Motor neuron (in vitro differentiated cells): ENCODE measurements at regions of chr2 and their contacts with region 1.

Region 1: GRCh38 chr2:88144914-88145497 is 17.1 kb upstream of the FABP1 start:
- ATAC-seq: no peak
- H3K4me3 ChIP-seq: no peak overlapping the region
- H3K27ac ChIP-seq: no peak overlapping the region
- H3K4me1 ChIP-seq: no peaks in the 10 kb centered on the region

Region 2: GRCh38 chr2:88074854-88075292 is 70.1 kb before region 1 on chr2:
- in situ Hi-C with region 1: loop called in 3 of 9 experiments (anchors 10 to 25 kb)
- ATAC-seq: peak in 1 of 8 experiments; percentile 32
- H3K4me3 ChIP-seq: no peak overlapping the region
- H3K27ac ChIP-seq: no peak overlapping the region
- H3K4me1 ChIP-seq: no peaks in the 10 kb centered on the region

Region 3: GRCh38 chr2:88400037-88400767 is 255.2 kb after region 1 on chr2:
- in situ Hi-C with region 1: no loop called
- ATAC-seq: no peak
- H3K4me3 ChIP-seq: no peak overlapping the region
- H3K27ac ChIP-seq: no peak overlapping the region
- H3K4me1 ChIP-seq: no peaks in the 10 kb centered on the region

Region 4: DNA sequence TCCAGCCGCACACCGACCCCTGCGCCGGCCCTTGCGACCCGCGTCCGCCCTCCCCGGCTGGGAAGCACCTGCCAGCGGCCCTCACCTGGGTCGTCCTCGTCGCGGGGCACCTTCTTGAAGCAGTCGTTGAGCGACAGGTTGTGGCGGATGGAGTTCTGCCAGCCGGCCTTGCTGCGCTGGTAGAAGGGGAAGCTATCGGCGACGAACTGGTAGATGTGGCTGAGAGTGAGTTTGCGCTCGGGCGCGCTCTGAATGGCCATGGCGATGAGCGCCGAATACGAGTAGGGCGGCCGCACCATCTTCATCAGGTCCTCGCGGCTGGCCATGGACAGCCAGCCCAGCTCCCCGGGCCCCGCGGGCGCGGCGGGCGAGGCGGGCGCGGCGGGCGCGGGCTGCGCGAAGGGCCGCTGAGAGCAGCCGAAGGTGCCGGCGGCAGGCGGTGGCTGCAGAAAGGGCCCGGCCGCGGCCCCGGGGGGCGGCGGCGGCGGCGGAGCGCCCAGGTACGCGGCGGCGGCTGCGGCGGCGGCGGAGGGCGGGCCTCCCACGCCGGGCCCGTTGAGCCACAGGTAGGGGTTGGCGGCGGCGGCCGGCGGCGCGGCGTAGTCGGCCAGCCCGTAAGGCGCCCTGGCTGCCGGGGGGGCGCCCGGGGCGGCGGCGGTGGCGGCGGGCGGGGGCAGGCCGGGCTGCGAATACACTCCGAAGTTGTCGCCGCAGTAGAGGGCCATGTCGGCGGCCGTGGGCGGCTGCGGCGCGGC is 307.0 kb after region 1 on chr2:
- in situ Hi-C with region 1: no loop called
- ATAC-seq: peak; percentile 23 to 79 (median 70)
- H3K4me3 ChIP-seq: peak overlapping the region; percentile 28 to 45 (median 33)
- H3K27ac ChIP-seq: no peak overlapping the region
- H3K4me1 ChIP-seq: peaks cover 3 to 8% of the 10 kb centered on the region in 2 donors

Region 5: DNA sequence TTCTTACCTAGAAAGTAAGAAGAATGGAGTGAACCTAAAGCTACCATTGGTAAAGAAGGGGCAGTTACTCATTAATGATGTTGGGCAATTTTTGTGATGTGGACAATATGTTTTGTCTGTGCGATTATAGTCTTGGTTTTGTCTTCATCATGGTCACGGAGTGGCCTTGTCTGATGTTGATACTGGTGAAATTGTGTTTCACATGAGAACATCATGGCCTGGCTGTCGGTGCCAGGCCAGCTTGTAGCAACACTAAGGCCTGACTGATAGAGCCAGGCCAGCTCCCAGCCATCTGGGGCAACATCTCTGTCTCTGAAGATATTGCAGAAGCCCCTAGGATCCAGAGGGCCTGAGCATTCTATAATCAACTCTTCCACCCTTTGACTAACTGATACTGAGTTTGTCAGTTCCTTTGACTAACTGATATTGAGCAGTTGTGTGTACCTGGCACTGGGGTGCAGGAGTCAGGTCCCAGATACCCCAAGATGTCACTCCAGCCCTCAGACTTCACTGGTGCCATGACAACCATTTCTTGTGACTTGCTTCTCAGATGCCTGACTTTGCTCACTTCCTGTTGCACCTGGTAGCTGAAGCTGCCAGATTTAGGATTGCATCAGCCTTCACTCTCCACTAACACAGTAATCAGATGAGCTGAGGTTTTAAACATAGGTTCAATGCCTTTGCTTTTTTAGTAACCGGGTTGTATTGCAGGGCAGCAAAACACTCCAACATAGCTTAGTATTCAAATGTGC is 609.0 kb after region 1 on chr2:
- in situ Hi-C with region 1: no loop called
- ATAC-seq: peak in 2 of 8 experiments; percentile 32 to 48
- H3K4me3 ChIP-seq: no peak overlapping the region
- H3K27ac ChIP-seq: no peak overlapping the region
- H3K4me1 ChIP-seq: no peaks in the 10 kb centered on the region